B cell (primary cell): ENCODE measurements at regions of chr7 and their contacts with region 1.

Region 1: DNA sequence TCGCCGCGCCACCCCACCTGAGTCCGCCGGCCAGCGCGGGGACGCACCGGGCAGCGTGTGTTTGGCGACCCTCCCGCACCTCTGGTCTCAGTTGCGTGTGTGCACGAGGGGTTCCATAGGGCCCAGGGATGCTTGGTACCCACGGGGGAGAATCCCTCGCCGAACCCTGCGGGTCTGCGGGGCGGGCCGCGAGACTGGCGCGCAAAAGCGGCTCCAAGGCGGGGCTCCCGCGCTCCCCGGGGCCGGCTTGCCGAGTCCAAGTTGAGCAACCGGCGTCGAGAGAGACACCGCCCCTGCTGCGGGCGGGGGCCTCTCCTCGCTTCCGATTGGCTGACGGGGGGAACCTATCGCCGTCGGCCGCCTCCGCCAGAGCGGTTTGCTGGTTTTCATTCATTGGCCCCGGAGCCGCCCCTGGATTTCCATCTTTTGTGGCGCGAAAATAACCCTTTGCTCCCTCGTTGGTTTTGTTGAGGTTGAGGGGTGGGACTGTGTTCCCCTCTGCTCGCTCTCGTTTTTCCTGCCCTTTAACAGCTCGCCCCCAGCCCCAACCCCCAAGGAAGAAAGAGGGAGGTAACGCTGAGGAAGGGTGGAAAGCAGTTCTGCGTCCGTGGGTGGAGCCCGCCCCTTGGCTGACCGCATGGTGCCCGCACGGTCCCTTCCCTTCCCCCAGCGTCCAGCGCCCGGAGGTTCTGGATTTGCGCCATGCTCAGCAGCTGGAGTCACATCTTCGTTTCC is 4.0 kb upstream of the IGF2BP3 start:
- DNase-seq: peak; percentile 80
- ATAC-seq: peak; percentile 60
- H3K4me3 ChIP-seq: peak overlapping the region; percentile 1 to 81 (median 36)
- H3K4me3 Mint-ChIP-seq: peak overlapping the region; percentile 81
- H3K27ac ChIP-seq: no peak overlapping the region
- H3K27ac Mint-ChIP-seq: peak overlapping the region; percentile 71
- H3K4me1 ChIP-seq: peaks cover 41 to 51% of the 10 kb centered on the region in 2 donors
- H3K4me1 Mint-ChIP-seq: peaks cover 30% of the 10 kb centered on the region
- H3K27me3 ChIP-seq: peaks cover 0 to 83% (median 71%) of the 10 kb centered on the region in 4 experiments
- H3K27me3 Mint-ChIP-seq: peaks cover 61% of the 10 kb centered on the region
- CTCF ChIP-seq: no peak

Region 2: DNA sequence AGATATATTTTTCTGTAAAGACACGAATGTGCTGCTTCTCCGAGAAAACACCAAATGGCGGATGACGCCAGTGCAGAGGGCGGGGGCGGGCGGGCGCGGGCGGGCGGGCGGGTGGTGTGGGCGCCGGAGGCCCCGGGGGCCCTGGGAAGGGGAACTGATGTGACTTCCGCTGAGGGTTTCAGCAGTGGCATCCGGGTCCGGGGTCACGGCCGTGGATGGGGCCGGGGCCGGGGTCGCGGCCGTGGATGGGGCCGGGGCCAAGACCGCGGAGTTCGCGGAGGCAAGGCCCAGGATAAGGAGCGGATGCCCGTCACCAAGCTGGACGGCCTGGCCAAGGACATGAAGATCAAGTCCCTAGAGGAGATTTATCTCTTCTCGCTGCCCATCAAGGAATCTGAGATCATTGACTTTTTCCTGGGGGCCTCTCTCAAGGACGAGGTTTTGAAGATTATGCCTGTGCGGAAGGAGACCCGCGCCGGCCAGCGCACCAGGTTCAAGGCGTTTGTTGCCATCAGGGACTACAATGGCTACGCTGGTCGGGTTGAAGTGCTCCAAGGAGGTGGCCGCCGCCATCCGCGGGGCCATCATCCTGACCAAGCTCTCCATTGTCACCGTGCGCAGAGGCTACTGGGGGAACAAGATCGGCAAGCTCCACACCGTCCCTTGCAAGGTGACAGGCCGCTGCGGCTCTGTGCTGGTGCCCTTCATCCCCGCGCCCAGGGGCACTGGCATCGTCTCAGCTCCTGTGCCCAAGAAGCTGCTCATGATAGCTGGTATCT is 16.3 kb after region 1 on chr7:
- CTCF ChIA-PET with region 1: interaction called, 4 read pairs
- POLR2A ChIA-PET with region 1: no interaction called
- intact Hi-C with region 1: loop called (anchors 2 kb)
- DNase-seq: peak; percentile 78
- ATAC-seq: peak; percentile 91
- H3K4me3 ChIP-seq: peak overlapping the region in 4 of 5 experiments; percentile 64 to 82 (median 75)
- H3K4me3 Mint-ChIP-seq: peak overlapping the region; percentile 88
- H3K27ac ChIP-seq: peak overlapping the region in 1 of 2 donors; percentile 62
- H3K27ac Mint-ChIP-seq: peak overlapping the region; percentile 87
- H3K4me1 ChIP-seq: peaks cover 5 to 11% of the 10 kb centered on the region in 2 donors
- H3K4me1 Mint-ChIP-seq: peaks cover 8% of the 10 kb centered on the region
- H3K27me3 ChIP-seq: no peaks in the 10 kb centered on the region
- H3K27me3 Mint-ChIP-seq: no peaks in the 10 kb centered on the region
- CTCF ChIP-seq: no peak